ENCODE measurements at regions of chr1 and their contacts with region 1.

Region 1: GRCh38 chr1:12407050-12407961 is 177.5 kb downstream of the VPS13D start:
- DNase-seq: peak; percentile 47
- ATAC-seq: peak; percentile 85
- H3K4me3 Mint-ChIP-seq: no peak overlapping the region
- H3K27ac Mint-ChIP-seq: no peak overlapping the region
- H3K4me1 Mint-ChIP-seq: peaks cover 18% of the 10 kb centered on the region
- H3K27me3 Mint-ChIP-seq: no peaks in the 10 kb centered on the region

Region 2: GRCh38 chr1:12208764-12209494 is 198.4 kb before region 1 on chr1:
- CTCF ChIA-PET with region 1: no interaction called
- DNase-seq: peak; percentile 88
- ATAC-seq: peak; percentile 79
- H3K4me3 Mint-ChIP-seq: no peak overlapping the region
- H3K27ac Mint-ChIP-seq: peak overlapping the region; percentile 61
- H3K4me1 Mint-ChIP-seq: peaks cover 46% of the 10 kb centered on the region
- H3K27me3 Mint-ChIP-seq: no peaks in the 10 kb centered on the region

Region 3: GRCh38 chr1:12424087-12424529 is 16.8 kb after region 1 on chr1:
- CTCF ChIA-PET with region 1: interaction called, 18 read pairs
- DNase-seq: no peak
- ATAC-seq: no peak
- H3K4me3 Mint-ChIP-seq: no peak overlapping the region
- H3K27ac Mint-ChIP-seq: no peak overlapping the region
- H3K4me1 Mint-ChIP-seq: peaks cover 6% of the 10 kb centered on the region
- H3K27me3 Mint-ChIP-seq: no peaks in the 10 kb centered on the region